AG04450 (cell line): ENCODE measurements at regions of chr11 and their contacts with region 1.

Region 1: DNA sequence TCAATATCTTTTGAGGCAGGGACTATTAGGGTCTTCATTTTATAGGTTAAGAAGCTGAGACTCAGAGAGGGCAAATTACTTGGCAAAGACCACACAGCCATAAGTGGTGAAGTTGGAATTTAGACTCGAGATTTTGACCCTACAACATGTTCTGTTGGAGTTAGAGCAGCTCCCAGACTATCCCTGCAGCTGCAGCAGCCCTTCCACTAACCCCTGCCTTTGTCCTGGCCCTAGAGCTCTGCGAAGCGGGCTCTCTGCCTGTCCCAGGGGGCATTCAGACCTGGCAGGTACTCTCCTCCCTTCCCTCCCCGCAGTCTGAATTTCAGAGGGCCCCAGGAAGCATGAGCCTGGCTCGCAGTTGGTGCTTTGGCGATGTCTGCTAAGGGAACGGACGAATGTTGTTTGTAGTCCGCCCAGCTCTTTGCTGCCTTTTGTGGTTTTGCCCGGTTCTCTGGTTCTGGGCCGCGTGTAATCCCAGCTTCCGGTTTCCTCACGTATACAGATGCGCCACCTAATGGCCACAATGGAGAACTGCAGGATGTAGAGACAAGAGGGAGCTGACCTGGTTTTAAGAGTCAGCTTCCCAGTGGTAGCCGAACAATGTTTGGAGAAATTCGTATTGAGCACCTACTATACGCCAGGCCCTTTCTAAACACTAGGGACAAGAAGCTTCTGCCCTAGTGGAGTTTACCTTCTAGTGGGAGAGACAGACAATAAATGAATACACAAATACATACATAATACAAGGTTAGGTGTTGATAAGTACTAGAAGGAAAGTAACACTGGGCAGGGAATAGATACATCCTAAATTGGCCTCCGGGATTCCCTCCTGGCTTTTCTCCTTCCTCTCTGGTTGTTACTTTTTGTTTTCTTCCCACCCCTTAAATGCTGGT is 125.2 kb downstream of the ST3GAL4 start:
- DNase-seq: peak; percentile 83
- H3K4me3 ChIP-seq: peak overlapping the region; percentile 25; the same call in 1 of the 2 replicates
- H3K27ac ChIP-seq: peak overlapping the region; percentile 82
- H3K27me3 ChIP-seq: peaks cover 4% of the 10 kb centered on the region
- CTCF ChIP-seq: peak; percentile 94

Region 2: GRCh38 chr11:126310228-126310991 is 170.2 kb before region 1 on chr11:
- CTCF ChIA-PET with region 1: interaction called, 163 read pairs
- POLR2A ChIA-PET with region 1: interaction called, 9 read pairs
- DNase-seq: no peak
- H3K4me3 ChIP-seq: no peak overlapping the region
- H3K27ac ChIP-seq: no peak overlapping the region
- H3K27me3 ChIP-seq: no peaks in the 10 kb centered on the region
- CTCF ChIP-seq: peak; percentile 92

Region 3: DNA sequence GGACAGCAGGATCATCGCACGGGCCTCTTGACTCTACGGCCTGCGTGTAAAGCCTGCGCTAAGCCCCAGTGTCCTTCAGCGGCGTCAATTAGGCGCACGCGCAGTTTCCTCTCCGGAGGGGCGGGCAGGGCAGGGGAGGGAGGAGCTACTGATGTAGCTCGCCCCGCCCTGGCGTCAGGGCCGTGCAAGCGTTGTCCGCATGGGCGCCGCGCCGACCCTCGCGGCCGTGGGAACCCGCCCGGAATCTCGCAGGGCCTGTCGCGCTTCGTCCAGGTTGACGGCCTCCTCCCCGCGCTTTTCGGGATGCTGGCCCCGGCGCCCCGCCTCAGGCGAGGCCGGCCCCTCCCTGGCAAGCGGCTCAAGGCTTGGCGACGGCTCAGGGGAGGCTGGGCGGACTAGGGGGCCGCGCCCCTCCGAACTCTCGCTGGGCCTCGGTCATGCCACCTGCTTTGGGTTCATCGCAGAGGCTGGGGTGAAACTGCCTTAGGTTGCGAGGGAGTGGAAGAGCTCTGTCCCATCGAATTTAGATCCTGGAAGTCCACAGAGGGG is 64.0 kb before region 1 on chr11:
- CTCF ChIA-PET with region 1: interaction called, 41 read pairs
- POLR2A ChIA-PET with region 1: interaction called, 3 read pairs
- DNase-seq: no peak
- H3K4me3 ChIP-seq: peak overlapping the region; percentile 56
- H3K27ac ChIP-seq: no peak overlapping the region
- H3K27me3 ChIP-seq: no peaks in the 10 kb centered on the region
- CTCF ChIP-seq: no peak

Region 4: DNA sequence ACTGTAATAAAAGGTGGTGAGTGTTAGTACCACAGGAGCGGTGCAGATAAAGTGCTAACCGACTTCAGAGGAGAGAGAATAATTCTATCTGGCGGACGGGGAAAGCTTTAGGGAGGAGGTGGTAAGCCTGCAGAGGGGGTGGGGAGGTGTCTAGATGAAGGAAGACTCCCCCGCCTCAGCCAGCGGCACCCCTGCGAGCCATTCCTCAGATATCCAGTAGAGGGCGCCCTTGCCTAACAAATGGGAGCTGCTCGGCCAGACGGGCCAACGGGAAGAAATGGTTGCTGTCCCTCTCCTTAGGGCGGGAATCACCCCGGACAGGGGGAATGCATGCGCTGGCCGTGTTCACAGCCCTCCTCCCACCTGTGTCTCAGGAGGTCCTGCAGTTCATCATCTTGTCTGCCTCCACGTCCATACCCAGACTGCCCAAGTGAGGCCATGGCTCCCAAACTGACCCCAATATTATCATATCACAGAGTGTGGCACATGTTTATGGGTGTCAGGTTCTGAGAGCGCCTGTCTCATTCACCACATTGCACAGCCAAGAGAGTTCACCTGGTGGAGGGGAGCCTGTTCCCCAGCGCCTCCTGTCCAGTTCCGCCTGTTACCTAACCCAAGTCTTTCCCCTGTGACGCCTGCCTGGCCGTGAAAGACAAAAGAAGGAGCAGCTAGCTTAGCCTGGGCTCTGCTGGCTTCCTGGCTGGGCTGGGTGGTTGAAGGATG is 39.7 kb before region 1 on chr11:
- CTCF ChIA-PET with region 1: interaction called, 80 read pairs
- POLR2A ChIA-PET with region 1: interaction called, 13 read pairs
- DNase-seq: no peak
- H3K4me3 ChIP-seq: no peak overlapping the region
- H3K27ac ChIP-seq: no peak overlapping the region
- H3K27me3 ChIP-seq: no peaks in the 10 kb centered on the region
- CTCF ChIP-seq: peak; percentile 92

Region 5: GRCh38 chr11:126465573-126466188 is 15.0 kb before region 1 on chr11:
- CTCF ChIA-PET with region 1: interaction called, 87 read pairs
- POLR2A ChIA-PET with region 1: no interaction called
- DNase-seq: no peak
- H3K4me3 ChIP-seq: no peak overlapping the region
- H3K27ac ChIP-seq: no peak overlapping the region
- H3K27me3 ChIP-seq: peaks cover 16% of the 10 kb centered on the region
- CTCF ChIP-seq: no peak

Region 6: GRCh38 chr11:126561327-126561893 is 80.8 kb after region 1 on chr11:
- CTCF ChIA-PET with region 1: interaction called, 12 read pairs
- POLR2A ChIA-PET with region 1: no interaction called
- DNase-seq: peak; percentile 45
- H3K4me3 ChIP-seq: no peak overlapping the region
- H3K27ac ChIP-seq: no peak overlapping the region
- H3K27me3 ChIP-seq: no peaks in the 10 kb centered on the region
- CTCF ChIP-seq: no peak